ENCODE measurements at regions of chr14 and their contacts with region 1.

Region 1: GRCh38 chr14:106436310-106436905 is 910.0 kb downstream of the TMEM121 start:
- DNase-seq: peak in 2 of 5 donors; percentile 58 to 72
- ATAC-seq: no peak
- H3K4me3 ChIP-seq: no peak overlapping the region
- H3K27ac ChIP-seq: no peak overlapping the region
- H3K4me1 ChIP-seq: no peaks in the 10 kb centered on the region
- H3K27me3 ChIP-seq: peaks cover 0 to 25% (median 0%) of the 10 kb centered on the region in 9 donors
- CTCF ChIP-seq: peak in 8 of 12 donors; percentile 30 to 45 (median 38)
- POLR2A ChIP-seq: no peak

Region 2: GRCh38 chr14:106518054-106518943 is 81.9 kb after region 1 on chr14:
- intact Hi-C with region 1: loop called in 1 of 10 experiments (anchors 10 kb)
- DNase-seq: peak in 3 of 5 donors; percentile 31 to 72 (median 34)
- ATAC-seq: no peak
- H3K4me3 ChIP-seq: no peak overlapping the region
- H3K27ac ChIP-seq: no peak overlapping the region
- H3K4me1 ChIP-seq: peaks cover 0 to 6% (median 0%) of the 10 kb centered on the region in 12 donors
- H3K27me3 ChIP-seq: peaks cover 0 to 20% (median under 1%) of the 10 kb centered on the region in 9 donors
- CTCF ChIP-seq: peak in 3 of 12 donors; percentile 24 to 52 (median 28)
- POLR2A ChIP-seq: no peak